Activated T-helper 1 cell treated with anti-CD3 and anti-CD28 coated beads, Interleukin-12 subunit alpha, Interleukin-12 subunit beta, Interleukin-2, Interleukin-4 antibody, amounts not matched to agents 30 ng/mL and 10 ng/mL and 1 ng/mL, durations not matched to agents 14 hours and 24 hours and 36 hours (primary cell): ENCODE measurements at regions of chr1 and their contacts with region 1.

Region 1: GRCh38 chr1:220776720-220777326 is 9.9 kb upstream of the MTARC1 start:
- DNase-seq: peak; percentile 32
- H3K4me3 Mint-ChIP-seq: no peak overlapping the region
- H3K27ac Mint-ChIP-seq: no peak overlapping the region
- H3K4me1 Mint-ChIP-seq: no peaks in the 10 kb centered on the region
- H3K27me3 Mint-ChIP-seq: peaks cover 7% of the 10 kb centered on the region

Region 2: DNA sequence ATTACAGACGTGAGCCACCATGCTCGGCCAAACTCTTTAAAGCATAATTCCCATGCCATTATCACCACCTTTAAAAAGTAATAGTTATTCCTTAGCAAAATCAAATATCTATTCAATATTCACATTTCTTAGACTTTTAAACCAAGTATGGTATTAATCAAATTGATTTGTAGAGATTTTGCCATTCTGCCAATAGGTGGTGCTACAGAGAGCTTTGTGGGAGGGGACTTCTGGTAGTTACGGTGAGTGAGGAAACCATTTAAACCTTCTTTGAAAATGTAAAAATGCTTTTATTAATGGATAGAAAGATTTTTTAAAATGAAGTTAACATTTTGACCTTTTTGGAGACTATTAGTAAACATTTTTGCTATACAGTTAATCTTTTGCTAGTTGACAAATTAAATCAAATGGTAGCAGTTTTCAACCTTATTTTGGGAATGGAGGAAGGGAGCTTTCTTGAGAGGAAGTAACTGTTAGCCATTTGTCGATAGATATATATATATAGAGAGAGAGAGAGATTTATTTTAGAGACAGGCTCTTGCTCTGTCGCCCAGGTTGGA is 663.6 kb before region 1 on chr1:
- intact Hi-C with region 1: loop called (anchors 5 kb)
- DNase-seq: no peak
- H3K4me3 Mint-ChIP-seq: no peak overlapping the region
- H3K27ac Mint-ChIP-seq: peak overlapping the region; percentile 55
- H3K4me1 Mint-ChIP-seq: peaks cover 4% of the 10 kb centered on the region
- H3K27me3 Mint-ChIP-seq: no peaks in the 10 kb centered on the region

Region 3: DNA sequence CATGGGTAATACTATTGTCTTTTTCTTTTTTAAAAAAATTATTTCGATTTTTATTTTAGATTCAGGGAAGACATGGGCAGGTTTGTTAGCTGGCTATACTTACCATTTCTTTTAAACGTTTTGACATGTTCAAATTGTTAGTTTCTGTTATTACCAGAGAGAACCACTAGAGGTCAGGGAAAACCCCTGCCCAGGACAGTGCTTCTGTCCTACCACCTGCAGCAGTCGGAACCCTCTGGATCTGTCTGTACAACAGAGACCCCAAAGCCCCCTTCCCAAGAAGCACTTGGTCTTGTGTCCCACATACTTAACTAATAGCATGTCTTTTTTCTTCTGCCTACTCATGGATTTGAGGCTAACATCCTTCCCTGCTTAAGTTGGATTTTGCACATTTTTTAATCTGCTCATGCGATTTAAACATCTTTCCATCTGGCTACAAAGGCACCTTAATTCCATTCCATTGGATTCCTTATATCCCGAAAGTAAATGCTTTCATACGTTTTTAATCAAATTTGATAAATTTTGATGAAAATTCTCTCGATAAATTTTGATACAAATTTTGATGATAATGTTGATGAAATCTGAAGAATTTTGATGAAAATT is 96.6 kb before region 1 on chr1:
- intact Hi-C with region 1: loop called (anchors 1 kb)
- DNase-seq: no peak
- H3K4me3 Mint-ChIP-seq: no peak overlapping the region
- H3K27ac Mint-ChIP-seq: no peak overlapping the region
- H3K4me1 Mint-ChIP-seq: no peaks in the 10 kb centered on the region
- H3K27me3 Mint-ChIP-seq: peaks cover 8% of the 10 kb centered on the region

Region 4: DNA sequence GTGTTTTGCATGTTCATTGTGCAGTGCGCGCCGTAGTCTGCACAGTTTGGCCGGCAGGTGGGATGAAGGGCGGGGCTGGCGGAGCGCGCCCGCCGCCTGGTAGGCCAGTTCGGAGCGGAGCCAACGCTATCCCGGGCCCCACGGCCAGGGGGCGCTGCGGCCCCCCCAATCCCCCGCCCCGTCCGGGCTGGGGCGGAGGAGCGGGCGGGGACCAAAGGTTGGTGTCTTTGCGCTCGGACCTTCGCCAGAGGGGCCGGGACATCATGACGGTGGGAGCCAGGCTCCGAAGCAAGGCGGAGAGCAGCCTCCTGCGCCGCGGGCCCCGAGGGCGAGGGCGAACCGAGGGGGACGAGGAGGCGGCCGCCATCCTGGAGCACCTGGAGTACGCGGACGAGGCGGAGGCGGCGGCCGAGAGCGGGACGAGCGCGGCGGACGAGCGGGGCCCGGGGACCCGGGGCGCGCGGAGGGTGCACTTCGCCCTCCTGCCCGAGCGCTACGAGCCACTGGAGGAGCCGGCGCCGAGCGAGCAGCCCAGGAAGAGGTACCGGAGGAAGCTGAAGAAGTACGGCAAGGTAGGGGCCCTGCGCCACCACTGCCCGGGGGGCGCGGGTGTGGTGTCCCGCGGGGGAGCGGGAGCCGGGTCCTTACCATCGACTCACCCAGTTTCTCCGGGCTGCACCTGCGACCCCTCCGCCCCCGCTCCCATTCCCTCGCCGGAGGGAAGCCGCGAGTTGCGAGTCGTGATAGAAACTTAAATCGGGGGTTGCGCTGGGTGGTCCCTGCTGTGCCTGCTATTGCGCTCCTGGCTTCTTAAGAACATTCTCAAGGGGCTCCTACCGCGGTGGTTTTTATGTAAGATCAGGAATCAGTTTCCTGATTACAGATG is 86.4 kb before region 1 on chr1 and contains the start of gene C1orf115:
- intact Hi-C with region 1: loop called (anchors 1 kb)
- DNase-seq: peak; percentile 63
- H3K4me3 Mint-ChIP-seq: peak within 1 kb of the TSS; percentile 84
- H3K27ac Mint-ChIP-seq: no peak within 1 kb of the TSS
- H3K4me1 Mint-ChIP-seq: peaks cover 7% of the 10 kb centered on the region
- H3K27me3 Mint-ChIP-seq: peaks cover 26% of the 10 kb centered on the region
- total RNA-seq, gene C1orf115: 0.05 TPM in 1 of 2 replicates, not detected in the other